ENCODE measurements at regions of chr20 and their contacts with region 1.

Region 1: DNA sequence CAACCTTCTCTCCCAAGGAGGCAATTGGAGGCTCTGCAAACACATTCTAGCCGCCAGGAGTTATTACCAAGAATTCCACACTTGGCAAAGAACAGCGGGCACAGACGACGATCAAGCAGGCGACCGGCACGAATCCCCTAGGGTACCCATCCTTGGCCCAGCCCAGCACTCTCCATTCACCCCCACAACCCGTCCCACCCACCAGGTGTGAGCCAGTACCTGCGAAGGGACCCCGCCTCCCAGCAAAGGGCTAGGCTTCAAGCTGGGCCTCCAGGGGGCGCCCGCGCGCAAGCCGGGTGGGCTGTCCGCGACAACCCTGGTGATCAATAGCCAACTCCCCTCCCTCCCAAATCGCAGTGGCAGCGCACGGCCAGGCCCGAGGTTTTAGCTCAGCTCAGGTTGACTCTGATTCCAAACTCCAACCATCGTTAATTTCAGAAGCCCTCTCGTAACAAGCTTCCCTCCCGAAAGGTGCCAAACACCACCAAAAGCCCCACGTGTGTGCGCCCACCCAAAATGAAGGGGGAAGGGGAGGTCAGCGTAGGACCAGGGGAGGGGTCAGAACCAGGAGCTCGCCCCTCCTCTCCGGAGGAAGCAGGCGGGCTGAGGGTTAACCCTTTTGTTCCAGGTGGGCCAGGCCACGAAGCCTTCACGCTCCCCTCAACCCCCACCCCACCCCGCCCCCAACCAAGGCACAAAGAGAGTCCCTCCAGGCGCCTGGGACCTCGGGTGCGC is 2.1 kb downstream of the SALL4 start:
- DNase-seq: peak; percentile 98 to 100
- H3K4me3 ChIP-seq: peak overlapping the region; percentile 54
- H3K4me3 Mint-ChIP-seq: peak overlapping the region; percentile 98
- H3K27ac Mint-ChIP-seq: peak overlapping the region; percentile 96
- H3K4me1 ChIP-seq: peaks cover 77% of the 10 kb centered on the region
- H3K4me1 Mint-ChIP-seq: peaks cover 78% of the 10 kb centered on the region
- H3K27me3 ChIP-seq: no peaks in the 10 kb centered on the region
- H3K27me3 Mint-ChIP-seq: no peaks in the 10 kb centered on the region
- CTCF ChIP-seq: peak; percentile 100

Region 2: DNA sequence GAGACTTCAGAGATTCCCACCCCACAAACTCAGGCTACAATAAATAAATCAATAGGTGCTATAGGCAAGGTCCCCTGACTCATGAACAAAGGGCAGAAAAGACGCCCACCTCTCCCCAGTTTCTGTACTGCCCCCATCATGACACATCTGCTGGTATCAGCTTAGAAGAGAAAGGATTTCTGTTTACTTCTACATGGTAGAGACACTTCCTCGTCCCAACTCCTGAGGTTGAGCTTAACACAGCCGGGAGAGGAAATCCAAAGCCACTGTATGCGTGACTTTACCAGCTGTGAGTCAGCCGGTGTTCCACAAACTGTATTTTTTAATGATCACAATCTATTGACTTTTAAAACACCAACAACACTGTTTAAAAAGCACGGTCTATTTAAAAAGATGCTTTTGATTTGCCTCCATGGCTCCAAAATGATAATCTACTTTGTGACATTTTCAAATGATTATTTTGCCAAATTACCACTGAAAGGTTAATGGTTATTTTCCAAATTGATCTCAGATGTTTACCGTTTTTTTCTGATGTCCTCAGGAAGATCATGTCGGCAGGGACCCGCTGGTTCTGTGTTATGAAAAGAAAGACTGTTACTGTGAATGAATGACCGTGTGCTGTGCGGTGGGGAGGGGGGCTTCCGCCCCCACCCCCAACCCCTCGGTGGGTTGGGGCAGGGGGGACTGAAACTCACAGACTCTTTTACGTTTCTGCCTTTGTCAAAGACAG is 104.5 kb before region 1 on chr20:
- CTCF ChIA-PET with region 1: interaction called, 31 read pairs
- POLR2A ChIA-PET with region 1: interaction called, 4 read pairs
- intact Hi-C with region 1: no loop called
- DNase-seq: no peak
- H3K4me3 ChIP-seq: no peak overlapping the region
- H3K4me3 Mint-ChIP-seq: no peak overlapping the region
- H3K27ac Mint-ChIP-seq: peak overlapping the region; percentile 0
- H3K4me1 ChIP-seq: peaks cover 4% of the 10 kb centered on the region
- H3K4me1 Mint-ChIP-seq: peaks cover 29% of the 10 kb centered on the region
- H3K27me3 ChIP-seq: no peaks in the 10 kb centered on the region
- H3K27me3 Mint-ChIP-seq: no peaks in the 10 kb centered on the region
- CTCF ChIP-seq: no peak

Region 3: GRCh38 chr20:51837876-51838420 is 37.7 kb after region 1 on chr20:
- CTCF ChIA-PET with region 1: interaction called, 12 read pairs
- POLR2A ChIA-PET with region 1: no interaction called
- intact Hi-C with region 1: loop called (anchors 1 kb)
- DNase-seq: peak; percentile 62 to 68
- H3K4me3 ChIP-seq: no peak overlapping the region
- H3K4me3 Mint-ChIP-seq: no peak overlapping the region
- H3K27ac Mint-ChIP-seq: peak overlapping the region; percentile 75
- H3K4me1 ChIP-seq: peaks cover 13% of the 10 kb centered on the region
- H3K4me1 Mint-ChIP-seq: peaks cover 17% of the 10 kb centered on the region
- H3K27me3 ChIP-seq: no peaks in the 10 kb centered on the region
- H3K27me3 Mint-ChIP-seq: no peaks in the 10 kb centered on the region
- CTCF ChIP-seq: no peak

Region 4: DNA sequence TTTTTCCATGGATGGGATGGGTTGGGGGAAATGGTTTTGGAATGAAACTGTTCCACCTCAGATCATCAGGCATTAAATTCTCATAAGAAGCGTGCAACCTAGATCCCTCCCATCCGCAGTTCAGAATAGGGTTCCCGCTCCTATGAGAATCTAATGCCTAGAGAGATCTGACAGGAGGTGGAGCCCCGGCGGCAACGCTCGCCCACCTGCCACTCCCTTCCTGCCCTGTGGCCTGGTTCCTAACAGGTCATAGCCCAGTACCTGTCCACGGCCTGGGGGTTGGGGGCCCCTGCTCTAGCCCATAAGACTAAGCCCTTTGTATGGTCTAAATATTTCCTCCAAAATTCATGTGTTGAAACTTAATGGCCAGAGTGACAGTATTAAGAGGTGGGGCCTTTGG is 94.4 kb after region 1 on chr20:
- CTCF ChIA-PET with region 1: interaction called, 11 read pairs
- POLR2A ChIA-PET with region 1: interaction called, 12 read pairs
- intact Hi-C with region 1: no loop called
- DNase-seq: no peak
- H3K4me3 ChIP-seq: no peak overlapping the region
- H3K4me3 Mint-ChIP-seq: no peak overlapping the region
- H3K27ac Mint-ChIP-seq: no peak overlapping the region
- H3K4me1 ChIP-seq: peaks cover 26% of the 10 kb centered on the region
- H3K4me1 Mint-ChIP-seq: peaks cover 45% of the 10 kb centered on the region
- H3K27me3 ChIP-seq: no peaks in the 10 kb centered on the region
- H3K27me3 Mint-ChIP-seq: no peaks in the 10 kb centered on the region
- CTCF ChIP-seq: no peak

Region 5: DNA sequence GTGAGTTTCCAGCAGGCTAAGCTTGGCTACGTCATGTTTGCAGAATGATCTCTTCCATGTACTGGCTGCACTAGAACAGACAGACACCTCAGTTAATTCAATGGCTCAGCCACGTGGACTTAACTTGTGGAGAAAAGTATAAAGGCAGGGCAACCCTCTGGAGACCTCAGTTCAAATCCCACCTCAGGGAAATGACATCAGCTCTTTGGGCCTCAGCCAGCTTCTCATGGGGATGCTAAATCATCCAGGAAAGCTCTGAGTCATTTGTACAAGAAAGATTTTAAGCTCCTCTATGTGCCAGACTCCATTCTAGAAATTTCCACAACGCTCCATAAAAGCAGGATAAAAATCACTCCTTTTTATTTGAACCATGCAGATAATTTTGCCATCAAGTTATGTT is 130.5 kb after region 1 on chr20:
- CTCF ChIA-PET with region 1: interaction called, 9 read pairs
- POLR2A ChIA-PET with region 1: no interaction called
- intact Hi-C with region 1: loop called (anchors 5 kb)
- DNase-seq: no peak
- H3K4me3 ChIP-seq: no peak overlapping the region
- H3K4me3 Mint-ChIP-seq: peak overlapping the region; percentile 65
- H3K27ac Mint-ChIP-seq: peak overlapping the region; percentile 80
- H3K4me1 ChIP-seq: peaks cover 34% of the 10 kb centered on the region
- H3K4me1 Mint-ChIP-seq: peaks cover 33% of the 10 kb centered on the region
- H3K27me3 ChIP-seq: no peaks in the 10 kb centered on the region
- H3K27me3 Mint-ChIP-seq: no peaks in the 10 kb centered on the region
- CTCF ChIP-seq: no peak

Region 6: DNA sequence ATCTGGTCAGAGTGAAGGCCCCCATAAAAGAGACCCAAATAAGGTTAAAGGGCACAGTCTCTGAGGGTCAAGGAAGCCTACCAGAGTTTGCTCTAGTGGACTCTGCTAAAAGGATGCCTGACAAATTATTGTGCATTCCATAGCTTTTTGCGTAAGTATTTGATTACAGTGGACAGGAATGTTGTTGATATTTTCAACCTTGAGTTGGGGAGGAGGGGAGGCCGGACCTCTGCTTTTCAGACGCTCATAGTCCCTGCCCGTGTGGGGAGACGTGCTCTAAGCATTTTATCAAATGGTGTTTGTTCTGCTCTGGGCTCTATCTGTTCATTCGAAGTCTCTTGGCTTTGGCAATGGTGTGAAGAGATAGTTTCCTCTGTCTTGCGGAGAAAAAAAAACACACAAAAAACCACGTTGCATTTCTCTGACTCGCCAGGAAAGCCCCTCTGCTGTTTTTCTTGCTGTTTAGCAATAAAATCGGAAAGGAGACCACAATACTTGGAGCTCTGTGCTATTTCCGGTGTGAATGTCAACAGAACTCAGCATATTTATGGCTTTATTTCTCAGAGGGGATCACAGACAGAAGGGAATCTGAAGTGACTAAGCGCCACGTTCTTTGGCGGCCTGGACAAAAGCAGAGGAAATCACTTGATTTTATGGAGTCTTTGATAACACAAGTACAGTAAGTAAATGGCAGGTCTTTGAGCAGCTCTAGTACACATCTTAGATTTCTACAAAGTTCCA is 231.5 kb after region 1 on chr20:
- CTCF ChIA-PET with region 1: interaction called, 24 read pairs
- POLR2A ChIA-PET with region 1: no interaction called
- intact Hi-C with region 1: no loop called
- DNase-seq: peak; percentile 82 to 90
- H3K4me3 ChIP-seq: peak overlapping the region; percentile 0
- H3K4me3 Mint-ChIP-seq: peak overlapping the region; percentile 64
- H3K27ac Mint-ChIP-seq: peak overlapping the region; percentile 83
- H3K4me1 ChIP-seq: peaks cover 44% of the 10 kb centered on the region
- H3K4me1 Mint-ChIP-seq: peaks cover 44% of the 10 kb centered on the region
- H3K27me3 ChIP-seq: no peaks in the 10 kb centered on the region
- H3K27me3 Mint-ChIP-seq: no peaks in the 10 kb centered on the region
- CTCF ChIP-seq: no peak